Left lung (tissue), 14 donors: ENCODE measurements at regions of chr17 and their contacts with region 1.

Region 1: GRCh38 chr17:52106638-52107261 is 51.8 kb downstream of the CA10 start:
- DNase-seq: peak in 2 of 4 donors; percentile 25 to 57
- ATAC-seq: peak; percentile 76
- H3K4me3 ChIP-seq: no peak overlapping the region
- H3K27ac ChIP-seq: no peak overlapping the region
- H3K4me1 ChIP-seq: no peaks in the 10 kb centered on the region
- H3K27me3 ChIP-seq: peaks cover 0 to 4% of the 10 kb centered on the region in 2 donors
- CTCF ChIP-seq: peak; percentile 57 to 68

Region 2: GRCh38 chr17:51371732-51372151 is 735.0 kb before region 1 on chr17:
- intact Hi-C with region 1: loop called in 1 of 2 experiments (anchors 10 kb)
- DNase-seq: peak in 3 of 4 donors; percentile 6 to 63 (median 45)
- ATAC-seq: peak; percentile 93
- H3K4me3 ChIP-seq: no peak overlapping the region
- H3K27ac ChIP-seq: no peak overlapping the region
- H3K4me1 ChIP-seq: peaks cover 0 to 5% of the 10 kb centered on the region in 2 donors
- H3K27me3 ChIP-seq: no peaks in the 10 kb centered on the region
- CTCF ChIP-seq: peak; percentile 40 to 45

Region 3: GRCh38 chr17:51764387-51764972 is 342.3 kb before region 1 on chr17:
- intact Hi-C with region 1: loop called in 1 of 2 experiments (anchors 10 kb)
- DNase-seq: peak in 2 of 4 donors; percentile 37 to 68
- ATAC-seq: peak; percentile 97
- H3K4me3 ChIP-seq: no peak overlapping the region
- H3K27ac ChIP-seq: no peak overlapping the region
- H3K4me1 ChIP-seq: no peaks in the 10 kb centered on the region
- H3K27me3 ChIP-seq: peaks cover 0 to 26% of the 10 kb centered on the region in 2 donors
- CTCF ChIP-seq: peak; percentile 73 to 79

Region 4: DNA sequence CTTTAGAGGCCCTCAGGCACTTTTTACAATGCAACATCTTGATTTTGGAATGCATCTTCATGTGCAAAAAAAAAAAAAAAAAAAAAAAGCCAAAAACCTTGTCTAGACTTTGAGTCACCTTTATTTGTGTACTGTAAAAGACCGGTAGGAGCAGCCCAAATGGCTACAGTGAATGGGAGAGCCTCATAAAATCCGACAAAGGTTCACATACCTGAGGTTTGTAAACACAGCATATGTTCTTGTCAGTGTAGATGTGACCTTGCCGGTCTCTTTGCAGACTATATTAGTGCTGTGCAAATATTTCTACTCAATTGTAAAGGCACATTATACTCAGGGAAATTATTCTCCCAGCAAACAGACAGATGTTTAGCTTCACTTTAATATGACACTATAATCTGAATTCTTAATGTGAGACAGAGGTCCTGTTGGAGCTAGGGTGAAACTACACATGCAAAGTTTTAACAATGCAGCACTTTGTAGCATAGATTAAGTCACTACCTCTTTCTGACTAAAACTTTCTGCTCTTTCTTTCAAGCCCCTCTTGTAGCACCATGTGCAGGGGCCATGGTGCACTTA is 159.5 kb before region 1 on chr17:
- intact Hi-C with region 1: no loop called
- DNase-seq: no peak
- ATAC-seq: no peak
- H3K4me3 ChIP-seq: no peak overlapping the region
- H3K27ac ChIP-seq: no peak overlapping the region
- H3K4me1 ChIP-seq: no peaks in the 10 kb centered on the region
- H3K27me3 ChIP-seq: no peaks in the 10 kb centered on the region
- CTCF ChIP-seq: no peak

Region 5: GRCh38 chr17:52064791-52065211 is 41.9 kb before region 1 on chr17:
- intact Hi-C with region 1: no loop called
- DNase-seq: no peak
- ATAC-seq: no peak
- H3K4me3 ChIP-seq: no peak overlapping the region
- H3K27ac ChIP-seq: no peak overlapping the region
- H3K4me1 ChIP-seq: no peaks in the 10 kb centered on the region
- H3K27me3 ChIP-seq: no peaks in the 10 kb centered on the region
- CTCF ChIP-seq: no peak